ENCODE measurements at regions of chr3 and their contacts with region 1.

Region 1: DNA sequence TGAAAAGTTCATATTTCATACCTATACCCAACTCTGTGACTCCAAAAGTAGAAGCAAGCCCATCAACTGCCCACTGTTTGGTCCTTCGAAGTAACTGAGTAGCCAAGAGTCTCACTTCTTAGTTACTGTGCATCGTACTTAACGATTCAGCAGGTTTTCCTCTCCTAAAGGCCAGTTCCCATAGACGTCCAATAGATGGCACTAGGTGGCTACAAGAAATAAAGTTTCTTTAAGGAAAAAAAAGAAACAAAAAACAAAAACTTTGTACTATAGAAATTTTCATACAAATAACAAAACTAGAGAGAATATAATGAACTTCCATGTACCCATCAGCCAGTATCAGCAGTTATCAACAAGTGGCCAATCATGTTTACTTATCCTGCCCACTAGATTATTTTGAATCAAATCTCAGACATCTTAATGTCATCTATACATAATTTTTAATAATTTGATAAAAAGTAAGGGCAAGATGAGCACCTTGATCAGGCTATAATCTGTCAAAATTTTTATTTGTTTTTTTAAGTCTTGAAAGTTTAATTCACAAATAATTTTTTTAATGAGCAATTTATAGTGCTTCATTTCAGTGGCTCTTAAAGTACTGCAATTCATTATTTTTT is 63.8 kb upstream of the ACP3 start:
- DNase-seq: no peak
- H3K4me3 ChIP-seq: no peak overlapping the region
- H3K27ac ChIP-seq: no peak overlapping the region
- H3K4me1 ChIP-seq: no peaks in the 10 kb centered on the region
- H3K27me3 ChIP-seq: no peaks in the 10 kb centered on the region
- CTCF ChIP-seq: peak; percentile 28 to 80 (median 78)

Region 2: DNA sequence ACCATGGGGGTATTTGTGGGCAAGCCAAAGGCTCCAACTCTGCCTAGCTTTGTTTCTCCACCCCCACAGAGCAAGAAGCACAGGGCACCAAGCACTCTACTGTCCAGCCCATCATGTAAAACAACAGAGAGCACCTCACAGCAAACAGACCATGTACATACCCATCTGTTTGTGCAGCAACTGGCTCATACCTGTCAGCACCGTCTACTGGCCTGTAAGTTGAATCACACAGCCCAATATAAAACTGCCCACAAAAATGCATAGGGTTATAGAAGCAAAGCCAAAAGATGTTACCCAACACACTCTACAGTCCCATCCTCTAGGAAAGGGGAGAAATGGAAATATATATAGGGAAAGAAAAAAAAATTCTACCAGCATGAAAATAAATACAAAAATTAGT is 78.9 kb before region 1 on chr3:
- intact Hi-C with region 1: no loop called
- DNase-seq: no peak
- H3K4me3 ChIP-seq: no peak overlapping the region
- H3K27ac ChIP-seq: no peak overlapping the region
- H3K4me1 ChIP-seq: no peaks in the 10 kb centered on the region
- H3K27me3 ChIP-seq: no peaks in the 10 kb centered on the region
- CTCF ChIP-seq: no peak

Region 3: DNA sequence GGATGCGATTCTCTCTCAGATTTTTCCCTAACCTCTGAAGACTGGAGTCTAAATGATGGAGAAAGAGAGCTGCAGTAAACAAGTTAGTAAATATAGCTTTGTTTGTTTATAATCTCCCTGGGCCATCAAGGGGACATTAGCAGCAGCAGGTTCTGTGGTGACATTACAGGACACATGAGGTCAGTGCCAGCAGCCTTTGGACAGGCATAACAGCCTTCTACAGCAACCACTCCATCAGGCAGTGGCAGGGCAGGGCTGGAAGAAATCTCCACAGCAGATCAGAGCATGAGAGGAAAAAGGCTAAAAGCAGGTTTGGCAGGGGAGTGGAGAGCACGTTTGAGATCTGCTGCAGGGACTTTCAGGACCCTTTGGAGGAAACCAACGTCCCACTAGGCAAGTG is 63.8 kb before region 1 on chr3:
- intact Hi-C with region 1: no loop called
- DNase-seq: no peak
- H3K4me3 ChIP-seq: no peak overlapping the region
- H3K27ac ChIP-seq: no peak overlapping the region
- H3K4me1 ChIP-seq: no peaks in the 10 kb centered on the region
- H3K27me3 ChIP-seq: no peaks in the 10 kb centered on the region
- CTCF ChIP-seq: no peak

Region 4: DNA sequence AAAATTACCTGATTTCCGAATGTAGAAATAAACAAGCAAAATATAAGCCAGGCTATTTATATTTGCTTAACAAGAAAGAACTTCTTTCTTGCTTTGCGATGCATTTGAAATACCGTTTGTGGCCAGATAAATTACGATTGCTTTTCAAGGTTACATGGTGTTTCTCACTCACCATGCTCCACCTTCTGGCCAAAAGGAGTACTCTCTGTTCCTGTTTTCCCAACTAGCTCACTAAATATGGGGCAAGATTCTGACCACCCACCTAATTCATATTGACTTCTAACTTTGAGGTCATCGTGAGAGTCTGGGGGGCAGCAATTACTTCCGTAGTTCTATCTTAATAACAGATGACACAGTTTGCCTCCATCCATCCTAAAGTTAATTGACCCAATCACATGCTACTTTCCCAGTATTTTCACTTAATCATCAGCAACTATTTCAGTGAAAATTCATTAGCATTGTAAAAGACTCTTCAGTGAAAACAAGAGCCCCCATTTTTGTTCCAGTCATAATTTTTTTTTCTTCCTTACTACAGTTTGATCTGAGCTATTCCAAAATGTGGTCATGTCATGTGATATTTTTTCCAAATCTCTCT is 89.7 kb after region 1 on chr3:
- intact Hi-C with region 1: loop called (anchors 1 kb)
- DNase-seq: peak in 1 of 2 donors; percentile 68
- H3K4me3 ChIP-seq: no peak overlapping the region
- H3K27ac ChIP-seq: no peak overlapping the region
- H3K4me1 ChIP-seq: no peaks in the 10 kb centered on the region
- H3K27me3 ChIP-seq: no peaks in the 10 kb centered on the region
- CTCF ChIP-seq: peak; percentile 60 to 79 (median 69)

Measured in ascending aorta (tissue), 2 donors.